OCI-LY7 (cell line): ENCODE measurements at regions of chr15 and their contacts with region 1.

Region 1: GRCh38 chr15:41972253-41973242 is at the start of gene EHD4:
- DNase-seq: peak; percentile 98
- H3K4me3 ChIP-seq: peak within 1 kb of the TSS; percentile 72
- H3K27ac ChIP-seq: peak within 1 kb of the TSS; percentile 88
- H3K4me1 ChIP-seq: peaks cover 38% of the 10 kb centered on the region
- CTCF ChIP-seq: peak; percentile 35; the same call in 1 of the 2 replicates
- total RNA-seq, gene EHD4: 13.5 and 14.2 TPM in 2 replicates

Region 2: GRCh38 chr15:41928637-41929620 is 43.6 kb before region 1 on chr15:
- CTCF ChIA-PET with region 1: no interaction called
- POLR2A ChIA-PET with region 1: interaction called, 3 read pairs
- intact Hi-C with region 1: loop called (anchors 5 kb)
- DNase-seq: no peak
- H3K4me3 ChIP-seq: no peak overlapping the region
- H3K27ac ChIP-seq: no peak overlapping the region
- H3K4me1 ChIP-seq: peaks cover 43% of the 10 kb centered on the region
- CTCF ChIP-seq: no peak

Region 3: GRCh38 chr15:41949401-41950126 is 23.0 kb before region 1 on chr15:
- CTCF ChIA-PET with region 1: no interaction called
- POLR2A ChIA-PET with region 1: no interaction called
- intact Hi-C with region 1: no loop called
- DNase-seq: no peak
- H3K4me3 ChIP-seq: no peak overlapping the region
- H3K27ac ChIP-seq: no peak overlapping the region
- H3K4me1 ChIP-seq: no peaks in the 10 kb centered on the region
- CTCF ChIP-seq: no peak

Region 4: DNA sequence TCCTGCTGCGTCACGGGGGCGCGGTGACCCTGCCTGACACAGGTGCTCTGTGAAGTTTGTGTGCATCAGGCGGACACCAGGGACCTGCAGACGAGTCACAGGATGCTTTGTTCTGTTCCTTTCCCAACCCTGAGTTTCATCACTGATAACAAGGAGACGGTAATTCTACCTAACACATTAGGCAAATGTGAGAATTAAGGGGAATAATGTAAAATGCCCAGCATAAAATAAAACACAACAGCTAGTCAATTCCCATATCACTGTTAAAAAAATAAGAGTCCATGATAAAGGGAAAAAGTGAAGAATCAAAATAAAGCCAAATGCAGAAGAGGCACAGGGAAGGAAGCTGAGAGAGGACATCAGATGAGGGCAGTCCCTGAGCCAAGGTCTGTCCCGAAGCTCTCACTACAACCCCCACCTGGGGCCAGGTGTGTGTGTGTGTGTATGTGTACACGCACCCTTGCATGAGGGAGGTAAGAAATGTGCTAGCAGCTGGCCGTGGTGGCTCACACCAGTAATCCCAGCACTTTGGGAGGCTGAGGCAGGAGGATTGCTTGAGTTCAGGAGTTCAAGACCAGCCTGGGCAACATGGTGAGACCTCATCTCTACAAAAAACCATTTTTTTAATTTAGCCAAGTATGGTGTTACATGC is 94.3 kb after region 1 on chr15:
- CTCF ChIA-PET with region 1: no interaction called
- POLR2A ChIA-PET with region 1: no interaction called
- intact Hi-C with region 1: no loop called
- DNase-seq: no peak
- H3K4me3 ChIP-seq: no peak overlapping the region
- H3K27ac ChIP-seq: no peak overlapping the region
- H3K4me1 ChIP-seq: peaks cover 15% of the 10 kb centered on the region
- CTCF ChIP-seq: peak; percentile 53; the same call in 1 of the 2 replicates